ENCODE measurements at regions of chr6 and their contacts with region 1.

Region 1: GRCh38 chr6:109705258-109705657 is 14.2 kb downstream of the FIG4 start:
- DNase-seq: peak; percentile 85
- ATAC-seq: peak; percentile 98
- H3K4me3 ChIP-seq: no peak overlapping the region
- H3K27ac ChIP-seq: no peak overlapping the region
- H3K4me1 ChIP-seq: peaks cover 4% of the 10 kb centered on the region
- H3K27me3 ChIP-seq: no peaks in the 10 kb centered on the region
- CTCF ChIP-seq: peak; percentile 98

Region 2: GRCh38 chr6:110039981-110040383 is 334.7 kb after region 1 on chr6:
- intact Hi-C with region 1: loop called (anchors 2 kb)
- DNase-seq: peak; percentile 66
- ATAC-seq: peak; percentile 58
- H3K4me3 ChIP-seq: peak overlapping the region; percentile 37
- H3K27ac ChIP-seq: peak overlapping the region; percentile 58
- H3K4me1 ChIP-seq: no peaks in the 10 kb centered on the region
- H3K27me3 ChIP-seq: no peaks in the 10 kb centered on the region
- CTCF ChIP-seq: peak; percentile 30

Region 3: GRCh38 chr6:110398778-110399177 is 693.5 kb after region 1 on chr6:
- intact Hi-C with region 1: loop called (anchors 10 kb)
- DNase-seq: no peak
- ATAC-seq: peak; percentile 44
- H3K4me3 ChIP-seq: no peak overlapping the region
- H3K27ac ChIP-seq: no peak overlapping the region
- H3K4me1 ChIP-seq: peaks cover 4% of the 10 kb centered on the region
- H3K27me3 ChIP-seq: no peaks in the 10 kb centered on the region
- CTCF ChIP-seq: no peak

Measured in upper lobe of right lung (tissue), 1 donor.